ENCODE measurements at regions of chr5 and their contacts with region 1.

Region 1: GRCh38 chr5:148826053-148826738 is at the start of gene ADRB2:
- DNase-seq: peak; percentile 97 to 98
- ATAC-seq: peak; percentile 77 to 79
- H3K4me3 ChIP-seq: peak within 1 kb of the TSS; percentile 60 to 81 (median 74)
- H3K27ac ChIP-seq: peak within 1 kb of the TSS; percentile 90 to 97 (median 94)
- H3K4me1 ChIP-seq: peaks cover 27 to 28% of the 10 kb centered on the region in 2 donors
- H3K27me3 ChIP-seq: no peaks in the 10 kb centered on the region
- CTCF ChIP-seq: peak in 1 of 5 experiments; percentile 3
- POLR2A ChIP-seq: peak; percentile 99
- total RNA-seq, gene ADRB2: 4.2 to 17.3 (median 6.8) TPM

Region 2: DNA sequence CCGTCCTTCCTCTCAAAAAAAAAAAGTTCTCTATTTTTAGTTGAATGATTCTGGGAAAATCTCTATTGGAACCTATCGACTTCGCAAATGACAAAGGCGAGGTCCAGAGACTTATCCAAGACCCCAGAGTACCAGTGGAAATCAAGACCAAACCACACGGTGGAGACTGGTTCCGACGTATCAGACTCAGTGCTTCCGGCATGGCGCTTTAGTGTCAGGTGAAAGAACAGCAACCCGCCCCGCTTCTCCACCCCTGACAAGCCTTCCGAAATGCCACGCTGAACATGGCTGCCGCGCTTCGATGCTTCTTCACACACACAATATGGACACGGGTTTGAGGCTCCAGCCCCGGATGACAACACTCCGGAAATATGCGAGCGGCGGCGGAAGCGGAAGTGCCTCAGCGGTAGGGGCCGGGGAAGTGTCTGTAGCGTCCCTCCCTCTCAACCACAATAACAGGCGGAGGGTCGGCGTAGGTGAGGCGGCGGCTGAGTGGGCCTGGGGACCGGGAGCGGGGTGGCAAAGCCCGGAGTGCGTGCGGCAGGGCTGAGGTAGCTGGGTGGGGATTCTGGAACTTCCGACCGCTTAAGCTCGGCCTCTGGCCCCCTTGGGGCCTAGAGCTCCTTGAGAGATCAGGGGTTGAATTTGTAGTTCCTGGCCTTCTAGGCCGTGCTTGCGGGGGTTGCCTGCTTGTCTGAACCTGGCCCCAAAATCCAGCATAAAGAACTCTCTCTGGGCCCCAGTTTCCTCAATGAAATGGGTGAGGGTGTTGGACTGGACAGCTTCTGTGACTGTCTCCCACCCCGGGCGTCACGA is 442.4 kb before region 1 on chr5 and contains the start of gene FBXO38:
- in situ Hi-C with region 1: no loop called
- intact Hi-C with region 1: loop called (anchors 5 kb)
- DNase-seq: peak; percentile 94 to 97
- ATAC-seq: peak; percentile 99 to 100
- H3K4me3 ChIP-seq: peak within 1 kb of the TSS; percentile 71 to 89 (median 78)
- H3K27ac ChIP-seq: peak within 1 kb of the TSS; percentile 84 to 92 (median 88)
- H3K4me1 ChIP-seq: peaks cover 22 to 34% of the 10 kb centered on the region in 2 donors
- H3K27me3 ChIP-seq: no peaks in the 10 kb centered on the region
- CTCF ChIP-seq: peak in 1 of 5 experiments; percentile 24
- POLR2A ChIP-seq: peak; percentile 75 to 78
- total RNA-seq, gene FBXO38: 31.1 to 49.6 (median 34.1) TPM

Region 3: DNA sequence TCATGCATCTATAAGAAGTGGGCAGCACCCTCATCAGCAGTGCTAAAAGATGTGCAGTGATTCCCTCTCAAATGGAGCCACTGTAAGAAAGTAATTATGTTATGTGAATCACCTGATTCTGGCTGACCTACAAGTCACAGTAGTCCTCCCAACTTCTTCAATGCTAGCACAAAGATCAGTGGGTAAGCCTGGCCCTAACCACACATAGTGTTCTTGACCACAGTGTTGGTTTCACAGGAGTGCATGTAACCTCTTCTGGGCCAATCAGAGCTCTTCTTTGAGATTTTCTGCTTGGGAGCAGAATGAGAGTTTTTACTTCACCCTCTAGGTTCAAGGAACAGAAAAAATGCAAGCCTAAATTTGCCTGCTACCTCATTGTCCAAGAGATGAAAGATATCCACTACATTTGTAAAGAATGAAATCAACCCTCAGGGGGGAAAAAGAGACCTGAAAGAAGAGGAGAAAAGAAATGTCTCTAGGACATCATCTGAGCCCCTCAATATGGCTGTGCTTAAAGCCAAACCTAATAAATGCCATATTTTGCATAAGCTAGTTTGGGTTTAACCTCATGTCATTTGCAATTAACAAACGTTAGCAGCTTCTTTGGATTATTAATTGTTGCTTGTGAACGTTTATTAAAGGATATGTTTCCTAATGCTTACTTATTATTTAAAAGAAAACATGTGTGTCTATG is 65.1 kb before region 1 on chr5:
- in situ Hi-C with region 1: no loop called
- intact Hi-C with region 1: no loop called
- DNase-seq: no peak
- ATAC-seq: no peak
- H3K4me3 ChIP-seq: no peak overlapping the region
- H3K27ac ChIP-seq: no peak overlapping the region
- H3K4me1 ChIP-seq: no peaks in the 10 kb centered on the region
- H3K27me3 ChIP-seq: no peaks in the 10 kb centered on the region
- CTCF ChIP-seq: no peak
- POLR2A ChIP-seq: no peak

Region 4: DNA sequence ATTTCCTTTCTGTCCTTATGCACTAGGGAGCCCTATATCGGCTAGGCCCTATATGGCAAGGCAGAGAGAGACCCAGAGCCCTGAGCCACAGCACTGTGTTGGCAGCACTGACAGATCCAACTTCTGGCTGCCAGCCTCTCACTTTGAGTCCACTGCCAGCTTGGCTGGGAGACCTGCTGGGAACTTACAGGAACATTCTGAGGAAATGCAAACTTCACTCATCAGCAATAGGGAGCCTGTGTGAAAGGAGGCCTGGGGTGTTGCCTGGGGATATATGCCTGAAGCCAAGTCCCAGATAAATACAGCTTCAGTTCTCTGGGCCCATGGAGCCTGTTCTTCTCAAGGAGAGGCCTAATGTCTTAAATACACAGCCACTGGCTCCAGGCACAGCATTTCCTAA is 78.2 kb after region 1 on chr5:
- in situ Hi-C with region 1: no loop called
- intact Hi-C with region 1: loop called (anchors 5 kb)
- DNase-seq: peak; percentile 68 to 81
- ATAC-seq: peak; percentile 84 to 94
- H3K4me3 ChIP-seq: no peak overlapping the region
- H3K27ac ChIP-seq: peak overlapping the region; percentile 59 to 82 (median 71)
- H3K4me1 ChIP-seq: peaks cover 15 to 63% of the 10 kb centered on the region in 2 donors
- H3K27me3 ChIP-seq: no peaks in the 10 kb centered on the region
- CTCF ChIP-seq: no peak
- POLR2A ChIP-seq: no peak

Region 5: DNA sequence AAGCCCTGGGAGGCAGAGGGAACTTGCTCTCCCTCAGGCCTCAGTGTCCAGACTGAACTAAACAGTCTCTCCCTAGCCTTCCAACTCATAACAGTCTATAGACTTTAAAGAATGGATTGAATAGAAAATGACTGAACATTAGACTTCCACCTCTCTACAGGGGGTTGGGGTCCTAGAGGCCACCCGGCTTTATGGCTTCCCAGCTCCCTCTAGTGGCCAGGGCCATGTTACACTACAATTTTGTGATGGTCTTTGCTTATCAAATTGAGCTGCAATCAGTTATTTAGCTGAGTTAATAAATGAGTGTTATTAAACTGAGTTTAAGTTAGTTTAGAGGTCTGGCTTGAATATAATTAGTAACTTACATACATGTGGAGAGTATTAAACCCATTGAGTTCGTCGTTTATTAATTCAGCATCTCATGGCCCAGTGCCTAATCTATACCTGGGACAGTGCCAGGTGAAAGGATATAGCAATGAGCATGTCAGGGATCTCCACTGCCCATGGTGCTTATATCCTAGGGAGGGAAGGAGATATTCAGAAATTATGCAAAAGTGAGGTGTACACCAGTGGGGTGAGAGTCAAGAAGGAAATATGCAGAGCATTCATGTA is 131.5 kb after region 1 on chr5:
- in situ Hi-C with region 1: loop called in 1 of 4 experiments (anchors 10 kb)
- intact Hi-C with region 1: no loop called
- DNase-seq: no peak
- ATAC-seq: peak; percentile 19 to 29
- H3K4me3 ChIP-seq: no peak overlapping the region
- H3K27ac ChIP-seq: no peak overlapping the region
- H3K4me1 ChIP-seq: peaks cover 0 to 6% of the 10 kb centered on the region in 2 donors
- H3K27me3 ChIP-seq: no peaks in the 10 kb centered on the region
- CTCF ChIP-seq: peak; percentile 74 to 86 (median 79)
- POLR2A ChIP-seq: no peak

Region 6: DNA sequence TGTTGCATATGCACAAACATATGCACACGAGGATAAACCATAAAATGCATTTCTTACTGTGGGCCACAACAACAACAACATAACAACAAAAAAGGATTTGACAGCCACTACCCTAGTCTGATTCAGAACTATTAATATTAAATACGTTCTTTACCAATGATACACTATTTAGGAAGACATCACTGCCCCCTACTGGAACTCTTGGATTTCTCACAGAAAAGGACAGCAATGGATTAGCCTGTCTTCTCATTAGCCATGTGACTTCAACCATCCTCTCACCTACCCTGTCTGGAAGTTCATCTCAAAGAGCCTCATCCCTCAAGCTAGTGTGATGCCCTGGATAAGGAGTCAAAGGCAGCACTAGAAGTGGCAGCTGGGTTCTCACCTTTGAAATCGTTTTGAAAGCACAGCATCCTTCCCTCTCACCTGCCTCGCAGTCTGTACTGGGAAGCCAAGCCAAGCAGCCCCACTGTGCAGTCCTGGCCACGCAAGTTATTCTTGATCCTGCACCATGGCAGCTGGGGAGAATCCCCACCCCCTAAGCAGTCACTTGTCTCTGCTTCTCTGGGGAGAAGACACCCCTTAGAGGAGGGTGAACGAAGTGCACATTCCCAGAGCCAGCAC is 172.1 kb after region 1 on chr5:
- in situ Hi-C with region 1: loop called in 1 of 4 experiments (anchors 10 kb)
- intact Hi-C with region 1: loop called (anchors 2 kb)
- DNase-seq: peak in 1 of 2 donors; percentile 30
- ATAC-seq: peak; percentile 55 to 68
- H3K4me3 ChIP-seq: no peak overlapping the region
- H3K27ac ChIP-seq: no peak overlapping the region
- H3K4me1 ChIP-seq: peaks cover 45 to 60% of the 10 kb centered on the region in 2 donors
- H3K27me3 ChIP-seq: no peaks in the 10 kb centered on the region
- CTCF ChIP-seq: peak; percentile 64 to 79 (median 71)
- POLR2A ChIP-seq: no peak

Region 7: DNA sequence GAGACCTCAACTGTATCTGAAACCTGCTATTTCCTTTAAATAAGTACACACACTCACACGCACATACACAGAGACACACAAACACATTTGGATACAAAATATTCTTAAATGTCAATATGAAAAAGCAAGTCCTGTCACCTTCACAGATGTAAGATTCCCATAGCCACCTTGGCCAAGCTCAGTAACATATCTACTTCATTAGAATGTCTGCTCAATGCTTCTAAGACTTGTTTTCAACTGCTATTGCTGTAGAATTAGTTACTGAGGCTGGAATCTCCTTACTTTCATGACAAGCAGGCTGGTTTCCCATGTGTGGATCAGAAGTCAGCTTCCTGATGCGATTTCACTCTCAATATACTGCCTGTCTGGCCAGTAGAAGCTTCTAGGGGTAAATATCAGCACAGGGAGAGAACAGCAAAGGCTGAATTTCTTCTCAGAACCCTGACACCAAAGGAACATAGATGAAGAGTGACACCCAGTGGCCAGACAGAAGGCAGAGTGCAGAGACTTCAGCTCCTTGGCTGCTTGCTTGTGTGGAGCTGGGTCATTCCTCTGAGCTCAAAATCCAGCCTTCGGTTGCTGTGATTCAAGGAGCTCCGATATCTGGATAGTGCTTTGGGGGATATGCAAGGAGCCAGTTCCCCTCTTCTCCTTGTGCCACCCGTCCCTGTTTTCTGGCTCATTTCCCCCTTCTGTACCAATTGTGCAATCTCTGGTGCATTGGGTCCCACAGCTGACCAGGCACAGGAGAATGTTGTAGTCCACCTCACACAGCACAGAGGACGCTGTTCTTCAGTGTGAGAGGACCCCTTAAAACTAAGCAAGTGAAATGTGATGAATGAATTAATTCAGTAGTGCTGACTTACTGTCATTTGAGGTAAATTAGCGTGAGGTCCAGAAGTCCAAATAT is 288.5 kb after region 1 on chr5:
- in situ Hi-C with region 1: no loop called
- intact Hi-C with region 1: no loop called
- DNase-seq: peak; percentile 38 to 55
- ATAC-seq: peak; percentile 75 to 96
- H3K4me3 ChIP-seq: no peak overlapping the region
- H3K27ac ChIP-seq: peak overlapping the region in 2 of 4 donors; percentile 51 to 54
- H3K4me1 ChIP-seq: peaks cover 0 to 4% of the 10 kb centered on the region in 2 donors
- H3K27me3 ChIP-seq: no peaks in the 10 kb centered on the region
- CTCF ChIP-seq: peak; percentile 51 to 82 (median 68)
- POLR2A ChIP-seq: no peak

Region 8: GRCh38 chr5:149268928-149269557 is 442.8 kb after region 1 on chr5:
- in situ Hi-C with region 1: no loop called
- intact Hi-C with region 1: loop called (anchors 5 kb)
- DNase-seq: no peak
- ATAC-seq: no peak
- H3K4me3 ChIP-seq: no peak overlapping the region
- H3K27ac ChIP-seq: no peak overlapping the region
- H3K4me1 ChIP-seq: peaks cover 12 to 20% of the 10 kb centered on the region in 2 donors
- H3K27me3 ChIP-seq: no peaks in the 10 kb centered on the region
- CTCF ChIP-seq: peak; percentile 70 to 88 (median 75)
- POLR2A ChIP-seq: no peak

Measured in gastrocnemius medialis (tissue), 4 donors.